GM10248 (cell line): ENCODE measurements at regions of chr9 and their contacts with region 1.

Region 1: GRCh38 chr9:130707225-130707976 is 13.8 kb downstream of the EXOSC2 start:
- DNase-seq: peak; percentile 43
- CTCF ChIP-seq: peak; percentile 75

Region 2: GRCh38 chr9:130499804-130500263 is 207.6 kb before region 1 on chr9:
- CTCF ChIA-PET with region 1: no interaction called
- POLR2A ChIA-PET with region 1: no interaction called
- DNase-seq: no peak
- CTCF ChIP-seq: no peak

Region 3: GRCh38 chr9:130626249-130626992 is 81.0 kb before region 1 on chr9:
- CTCF ChIA-PET with region 1: no interaction called
- POLR2A ChIA-PET with region 1: no interaction called
- DNase-seq: no peak
- CTCF ChIP-seq: no peak

Region 4: GRCh38 chr9:130693426-130694191 is 13.8 kb before region 1 on chr9 and contains the start of gene EXOSC2:
- CTCF ChIA-PET with region 1: interaction called, 51 read pairs
- POLR2A ChIA-PET with region 1: interaction called, 5 read pairs
- DNase-seq: peak; percentile 99
- CTCF ChIP-seq: no peak

Region 5: DNA sequence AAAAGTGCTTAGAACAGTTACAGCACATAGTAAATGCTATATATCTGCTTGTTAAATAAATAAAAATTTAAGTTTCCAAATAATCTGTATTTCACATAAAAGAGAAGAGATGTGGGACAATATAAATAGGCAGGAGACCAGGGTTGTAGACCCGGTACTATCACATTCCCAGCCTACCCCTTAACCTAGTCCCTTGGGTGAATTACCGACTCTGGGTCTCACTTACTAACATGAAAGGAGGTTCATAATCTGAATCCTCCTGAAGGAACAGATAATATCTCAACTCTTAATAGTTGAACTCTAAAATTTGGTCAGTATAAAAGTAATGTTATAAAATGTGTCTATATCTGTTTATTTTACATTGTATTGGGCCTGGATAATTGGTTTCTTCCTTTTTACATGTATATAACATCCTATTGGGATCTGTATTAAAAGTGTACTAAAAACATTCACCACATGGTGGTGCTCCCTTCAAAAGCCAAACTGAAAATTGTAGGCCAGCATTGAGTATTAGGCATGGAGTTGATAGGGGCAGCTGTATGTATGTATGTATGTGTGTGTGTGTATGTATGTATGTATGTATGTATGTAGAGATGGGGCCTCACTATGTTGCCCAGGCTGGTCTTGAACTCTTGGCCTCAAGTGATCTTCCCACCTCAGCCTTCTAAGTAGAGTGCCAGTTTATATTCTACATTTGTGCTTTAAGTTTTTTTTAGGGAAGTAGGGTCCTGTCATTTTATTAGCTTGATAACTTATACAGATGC is 63.5 kb after region 1 on chr9:
- CTCF ChIA-PET with region 1: interaction called, 14 read pairs
- POLR2A ChIA-PET with region 1: no interaction called
- DNase-seq: peak; percentile 50
- CTCF ChIP-seq: peak; percentile 55

Region 6: DNA sequence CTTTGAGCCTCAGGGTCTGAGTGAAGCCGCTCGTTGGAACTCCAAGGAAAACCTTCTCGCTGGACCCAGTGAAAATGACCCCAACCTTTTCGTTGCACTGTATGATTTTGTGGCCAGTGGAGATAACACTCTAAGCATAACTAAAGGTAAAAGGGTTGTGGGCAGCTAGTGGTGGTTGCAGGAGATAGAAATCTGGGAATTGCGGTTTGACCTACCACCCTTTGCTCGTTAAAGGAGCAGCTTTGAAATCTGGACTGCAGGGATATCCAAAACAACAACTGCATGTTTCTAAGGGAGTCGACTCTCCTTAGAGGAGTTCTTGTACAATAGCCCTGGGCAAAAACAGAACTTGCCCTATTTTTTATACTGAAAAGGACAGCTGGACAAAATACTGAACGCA is 146.7 kb after region 1 on chr9:
- CTCF ChIA-PET with region 1: interaction called, 18 read pairs
- POLR2A ChIA-PET with region 1: no interaction called
- DNase-seq: no peak
- CTCF ChIP-seq: no peak

Region 7: DNA sequence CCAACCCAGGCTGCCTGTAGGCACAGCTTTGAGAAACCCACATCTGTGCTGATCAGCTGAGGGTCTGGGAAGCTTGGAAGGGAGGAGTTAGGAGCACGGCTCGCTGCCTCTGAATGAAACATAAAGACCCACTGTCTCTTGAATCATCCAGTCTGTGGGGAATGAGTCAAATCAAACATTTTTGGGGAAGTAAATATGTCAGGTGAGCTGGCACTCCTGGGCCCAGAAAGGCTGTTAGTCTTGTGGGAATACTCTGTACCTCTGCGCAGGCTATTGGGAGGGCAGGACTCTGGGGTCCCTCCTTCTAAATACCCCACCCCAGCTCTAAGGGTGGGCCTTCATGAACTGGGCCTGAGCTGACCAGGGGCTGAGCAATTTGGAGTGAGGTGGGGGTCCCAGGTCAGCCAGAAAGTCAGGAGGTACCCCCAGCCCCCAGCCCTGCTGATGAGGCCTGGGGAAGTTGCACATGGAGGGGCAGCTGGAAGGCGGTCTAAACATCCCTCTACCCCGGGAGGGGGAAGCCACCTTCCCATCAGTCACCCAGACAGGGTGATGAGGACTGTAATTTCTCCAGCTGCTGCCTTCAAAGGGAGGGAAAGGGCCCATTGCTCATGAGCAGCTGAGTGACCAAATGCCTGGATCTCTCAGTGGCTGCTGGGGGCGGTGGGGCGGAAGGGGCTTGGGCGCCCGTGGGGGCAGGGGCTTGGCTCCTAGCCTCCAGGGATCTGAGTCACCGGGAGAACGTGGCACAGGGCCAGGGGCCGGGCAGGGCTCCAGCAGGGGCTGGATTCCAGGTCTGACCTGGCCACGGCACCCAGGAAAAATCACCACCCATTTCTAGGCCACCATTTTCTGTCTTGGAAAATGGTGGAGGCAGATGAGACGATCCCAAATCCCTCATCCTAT is 220.8 kb after region 1 on chr9:
- CTCF ChIA-PET with region 1: interaction called, 11 read pairs
- POLR2A ChIA-PET with region 1: no interaction called
- DNase-seq: peak; percentile 79
- CTCF ChIP-seq: no peak